ENCODE measurements at regions of chr15 and their contacts with region 1.

Region 1: DNA sequence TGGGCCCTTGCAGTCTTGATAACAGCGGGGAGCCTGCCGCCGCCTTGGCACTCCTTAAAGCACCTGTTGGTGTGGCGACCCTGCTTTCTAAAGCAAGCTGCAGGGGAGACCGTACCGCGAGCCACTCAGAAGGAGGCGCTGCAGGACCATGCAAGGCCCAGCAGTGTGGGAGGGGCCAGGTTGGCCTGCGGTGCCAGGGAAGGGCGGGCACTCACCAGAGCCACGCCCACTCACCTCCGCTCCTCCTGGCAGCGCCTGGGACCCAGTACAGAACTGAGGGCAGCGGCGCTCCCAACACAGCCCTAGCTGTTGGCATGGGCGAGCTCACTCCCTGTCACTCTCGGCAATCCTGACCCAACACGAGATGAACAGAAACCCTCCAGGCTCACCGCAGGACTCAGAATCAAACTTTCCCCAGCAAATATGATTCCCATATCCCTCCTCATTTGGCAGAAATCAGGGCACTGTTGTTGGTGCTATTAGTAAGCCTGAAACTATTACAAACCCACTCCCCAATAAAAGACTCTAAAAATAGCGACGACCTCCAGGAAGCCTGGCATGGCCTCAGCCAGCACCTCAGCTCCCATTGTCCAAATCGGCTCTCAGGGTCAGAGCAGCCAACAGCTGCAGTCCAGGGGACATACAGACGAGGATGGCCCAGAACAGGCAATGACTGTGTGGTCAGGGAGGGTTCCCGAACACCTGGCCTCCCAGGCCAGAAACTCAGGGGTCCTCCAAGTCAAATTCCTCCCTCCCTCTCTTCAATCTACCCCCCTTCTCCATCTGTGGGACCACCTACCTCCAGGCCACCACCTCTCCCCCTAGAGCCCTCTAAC is 77.2 kb downstream of the TBC1D2B start:
- DNase-seq: peak; percentile 88
- ATAC-seq: peak; percentile 99
- H3K4me3 Mint-ChIP-seq: no peak overlapping the region
- H3K27ac Mint-ChIP-seq: peak overlapping the region; percentile 48
- H3K4me1 Mint-ChIP-seq: peaks cover 16% of the 10 kb centered on the region
- H3K27me3 Mint-ChIP-seq: no peaks in the 10 kb centered on the region
- CTCF ChIP-seq: peak; percentile 70

Region 2: GRCh38 chr15:77966540-77967290 is 33.6 kb before region 1 on chr15:
- CTCF ChIA-PET with region 1: interaction called, 10 read pairs
- POLR2A ChIA-PET with region 1: no interaction called
- intact Hi-C with region 1: no loop called
- DNase-seq: peak; percentile 45
- ATAC-seq: no peak
- H3K4me3 Mint-ChIP-seq: no peak overlapping the region
- H3K27ac Mint-ChIP-seq: no peak overlapping the region
- H3K4me1 Mint-ChIP-seq: no peaks in the 10 kb centered on the region
- H3K27me3 Mint-ChIP-seq: no peaks in the 10 kb centered on the region
- CTCF ChIP-seq: peak; percentile 90